RWPE1 (cell line): ENCODE measurements at regions of chr19 and their contacts with region 1.

Region 1: GRCh38 chr19:14059093-14059480 is 2.8 kb downstream of the PALM3 start:
- DNase-seq: no peak
- H3K27ac ChIP-seq: no peak overlapping the region
- CTCF ChIP-seq: peak; percentile 78

Region 2: DNA sequence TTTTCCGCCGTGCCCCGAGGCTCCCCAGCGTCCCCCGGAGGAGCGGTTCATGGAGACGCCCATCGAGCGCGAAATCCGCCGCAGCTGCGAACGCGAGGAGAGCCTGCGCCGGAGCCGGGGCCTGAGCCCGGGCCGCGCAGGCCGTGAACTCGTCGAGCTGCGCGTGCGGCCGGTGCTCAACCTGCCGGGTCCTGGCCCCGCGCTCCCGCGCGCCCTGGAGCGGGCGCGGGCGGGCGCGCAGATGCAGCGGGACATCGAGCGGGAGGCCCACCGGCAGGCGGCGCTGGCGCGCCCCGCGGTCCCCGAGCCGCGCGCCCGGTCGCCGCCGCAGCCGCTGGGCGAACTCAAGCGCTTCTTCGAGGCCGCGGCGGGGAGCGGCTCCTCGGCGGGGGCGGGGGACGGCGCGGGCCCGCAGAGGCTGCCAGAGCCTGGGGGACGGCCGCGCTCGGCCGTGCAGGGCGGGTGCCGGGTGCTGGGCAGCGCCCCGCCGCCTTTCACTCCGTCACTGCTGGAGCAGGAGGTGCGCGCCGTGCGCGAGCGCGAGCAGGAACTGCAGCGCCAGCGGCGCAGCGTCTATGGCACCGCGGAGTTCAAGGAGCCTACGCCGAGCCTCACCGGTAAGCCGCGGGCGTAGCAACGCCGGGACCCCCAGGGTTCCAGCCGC is 14.3 kb after region 1 on chr19:
- CTCF ChIA-PET with region 1: interaction called, 22 read pairs
- POLR2A ChIA-PET with region 1: no interaction called
- DNase-seq: peak; percentile 81
- H3K27ac ChIP-seq: peak overlapping the region; percentile 85
- CTCF ChIP-seq: peak; percentile 99